ENCODE measurements at regions of chr17 and their contacts with region 1.

Region 1: GRCh38 chr17:42609182-42609813 is at the starts of genes RETREG3 and TUBG1:
- DNase-seq: peak; percentile 97 to 98
- H3K4me3 ChIP-seq: peak within 1 kb of the TSS; percentile 71 to 92 (median 83)
- H3K27ac ChIP-seq: peak within 1 kb of the TSS; percentile 92 to 94
- H3K4me1 ChIP-seq: peaks cover 0 to 6% of the 10 kb centered on the region in 2 donors
- H3K27me3 ChIP-seq: no peaks in the 10 kb centered on the region
- CTCF ChIP-seq: peak; percentile 17 to 63 (median 58)
- POLR2A ChIP-seq: peak; percentile 90
- total RNA-seq, gene RETREG3: 58.7 to 85.8 (median 62.4) TPM
- total RNA-seq, gene TUBG1: 20.5 to 34.4 (median 22.8) TPM

Region 2: GRCh38 chr17:42585353-42585752 is 23.9 kb before region 1 on chr17:
- intact Hi-C with region 1: no loop called
- DNase-seq: peak in 1 of 2 donors; percentile 2
- H3K4me3 ChIP-seq: no peak overlapping the region
- H3K27ac ChIP-seq: no peak overlapping the region
- H3K4me1 ChIP-seq: no peaks in the 10 kb centered on the region
- H3K27me3 ChIP-seq: no peaks in the 10 kb centered on the region
- CTCF ChIP-seq: no peak
- POLR2A ChIP-seq: no peak

Region 3: DNA sequence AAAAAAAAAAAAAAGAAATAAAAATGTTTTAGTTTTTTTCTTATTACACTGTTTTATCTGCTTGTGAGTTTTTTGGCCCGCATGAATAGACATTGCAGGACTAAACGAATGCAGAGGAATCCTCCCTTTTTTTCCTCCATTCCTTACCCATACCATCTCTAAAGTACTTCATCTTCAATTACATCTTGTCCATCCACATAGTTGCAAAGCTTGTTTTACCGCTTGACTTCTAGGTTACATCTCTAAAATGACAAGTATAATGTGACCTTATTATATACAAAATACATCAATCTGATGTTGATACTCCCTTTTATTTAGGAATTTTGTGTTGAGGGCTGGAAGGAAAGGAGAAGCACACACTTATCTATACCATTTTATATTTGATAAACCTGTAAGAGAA is 12.9 kb before region 1 on chr17:
- intact Hi-C with region 1: loop called (anchors 1 kb)
- DNase-seq: no peak
- H3K4me3 ChIP-seq: no peak overlapping the region
- H3K27ac ChIP-seq: no peak overlapping the region
- H3K4me1 ChIP-seq: no peaks in the 10 kb centered on the region
- H3K27me3 ChIP-seq: no peaks in the 10 kb centered on the region
- CTCF ChIP-seq: no peak
- POLR2A ChIP-seq: no peak

Region 4: GRCh38 chr17:42698736-42699414 is 89.6 kb after region 1 on chr17:
- intact Hi-C with region 1: no loop called
- DNase-seq: no peak
- H3K4me3 ChIP-seq: no peak overlapping the region
- H3K27ac ChIP-seq: peak overlapping the region in 1 of 2 donors; percentile 6
- H3K4me1 ChIP-seq: no peaks in the 10 kb centered on the region
- H3K27me3 ChIP-seq: no peaks in the 10 kb centered on the region
- CTCF ChIP-seq: no peak
- POLR2A ChIP-seq: no peak